AG04450 (cell line): ENCODE measurements at regions of chr15 and their contacts with region 1.

Region 1: GRCh38 chr15:63048115-63048775 is 5.7 kb downstream of the TPM1 start:
- DNase-seq: peak; percentile 88
- H3K4me3 ChIP-seq: peak overlapping the region; percentile 94
- H3K27ac ChIP-seq: peak overlapping the region; percentile 84
- H3K27me3 ChIP-seq: no peaks in the 10 kb centered on the region
- CTCF ChIP-seq: peak; percentile 94

Region 2: GRCh38 chr15:62782039-62782791 is 266.0 kb before region 1 on chr15:
- CTCF ChIA-PET with region 1: interaction called, 17 read pairs
- POLR2A ChIA-PET with region 1: interaction called, 9 read pairs
- DNase-seq: peak; percentile 59
- H3K4me3 ChIP-seq: no peak overlapping the region
- H3K27ac ChIP-seq: peak overlapping the region; percentile 31
- H3K27me3 ChIP-seq: no peaks in the 10 kb centered on the region
- CTCF ChIP-seq: peak; percentile 75

Region 3: DNA sequence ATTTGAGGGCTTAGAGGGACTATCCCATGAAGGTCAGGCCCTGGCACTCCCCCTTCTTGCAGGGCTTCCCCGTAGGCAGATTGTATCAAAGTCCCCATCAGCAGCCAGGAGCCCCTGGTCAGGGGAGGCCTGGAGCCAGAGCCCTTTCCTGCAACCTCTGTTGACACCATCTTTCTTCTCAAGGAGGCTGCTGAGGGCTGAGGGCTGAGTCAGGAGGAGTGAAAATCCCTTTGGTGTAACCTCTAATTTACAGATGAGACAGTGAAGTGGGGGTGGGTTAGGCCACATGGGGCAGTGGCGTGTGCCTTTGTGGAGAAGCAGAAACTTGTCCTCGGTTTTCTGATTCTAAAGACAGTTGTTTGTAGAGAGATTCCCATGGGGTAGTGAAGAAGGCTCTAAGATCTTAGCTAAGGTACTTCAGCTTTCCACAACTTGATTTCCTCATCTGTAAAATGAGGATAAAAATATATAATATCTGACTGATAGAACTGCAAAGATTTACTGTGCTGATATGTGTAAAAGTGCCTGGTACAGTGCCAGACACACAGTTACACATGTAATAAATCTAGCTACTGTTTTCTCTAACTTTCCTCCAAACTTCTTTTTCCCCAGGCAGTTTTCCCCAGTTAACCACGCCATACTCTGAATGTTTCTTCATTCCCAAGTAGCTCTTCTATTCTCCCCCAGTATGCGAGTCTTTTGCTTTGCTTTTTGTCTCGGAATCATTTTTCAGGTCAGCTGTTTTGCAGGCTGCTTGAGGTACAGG is 255.1 kb before region 1 on chr15:
- CTCF ChIA-PET with region 1: no interaction called
- POLR2A ChIA-PET with region 1: no interaction called
- DNase-seq: no peak
- H3K4me3 ChIP-seq: no peak overlapping the region
- H3K27ac ChIP-seq: no peak overlapping the region
- H3K27me3 ChIP-seq: no peaks in the 10 kb centered on the region
- CTCF ChIP-seq: no peak

Region 4: GRCh38 chr15:63004211-63004610 is 44.0 kb before region 1 on chr15:
- CTCF ChIA-PET with region 1: no interaction called
- POLR2A ChIA-PET with region 1: no interaction called
- DNase-seq: no peak
- H3K4me3 ChIP-seq: no peak overlapping the region
- H3K27ac ChIP-seq: no peak overlapping the region
- H3K27me3 ChIP-seq: no peaks in the 10 kb centered on the region
- CTCF ChIP-seq: no peak

Region 5: DNA sequence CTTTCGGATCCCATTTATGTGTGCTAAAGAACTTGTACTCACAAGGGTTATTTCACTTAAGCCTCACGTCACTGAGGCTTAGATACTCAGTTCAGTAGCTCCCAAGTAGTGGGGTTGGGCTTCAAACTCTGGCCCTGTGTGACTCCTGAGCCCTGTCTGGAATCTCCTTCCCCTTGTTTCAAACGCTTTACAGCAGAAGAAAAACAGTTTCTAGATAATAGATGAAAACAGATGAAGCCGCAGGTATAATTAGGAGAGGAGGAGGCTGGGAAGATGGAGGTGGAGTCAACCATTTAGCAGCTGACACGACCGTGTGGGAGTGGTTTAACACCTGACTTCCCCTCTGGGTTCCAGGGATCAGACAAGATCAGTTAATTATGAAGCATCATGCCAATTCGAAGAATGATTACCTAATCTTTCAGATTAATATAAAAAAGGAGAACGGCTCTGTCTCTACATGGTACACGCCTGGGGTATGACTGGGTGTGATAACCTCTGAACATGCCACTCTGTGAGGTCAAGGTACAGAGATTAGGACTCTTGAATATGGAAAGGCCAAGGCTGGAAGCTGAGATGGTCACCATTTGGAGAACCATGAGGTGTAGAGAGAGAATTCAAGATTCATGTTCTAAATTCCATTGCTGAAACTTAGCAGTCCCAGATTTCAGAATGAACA is 25.4 kb after region 1 on chr15:
- CTCF ChIA-PET with region 1: interaction called, 8 read pairs
- POLR2A ChIA-PET with region 1: interaction called, 12 read pairs
- DNase-seq: no peak
- H3K4me3 ChIP-seq: no peak overlapping the region
- H3K27ac ChIP-seq: peak overlapping the region; percentile 22
- H3K27me3 ChIP-seq: no peaks in the 10 kb centered on the region
- CTCF ChIP-seq: no peak

Region 6: GRCh38 chr15:63093486-63094205 is 45.4 kb after region 1 on chr15:
- CTCF ChIA-PET with region 1: interaction called, 69 read pairs
- POLR2A ChIA-PET with region 1: interaction called, 21 read pairs
- DNase-seq: peak; percentile 52
- H3K4me3 ChIP-seq: no peak overlapping the region
- H3K27ac ChIP-seq: peak overlapping the region; percentile 40
- H3K27me3 ChIP-seq: no peaks in the 10 kb centered on the region
- CTCF ChIP-seq: peak; percentile 89

Region 7: GRCh38 chr15:63195569-63196015 is 147.3 kb after region 1 on chr15:
- CTCF ChIA-PET with region 1: interaction called, 11 read pairs
- POLR2A ChIA-PET with region 1: no interaction called
- DNase-seq: no peak
- H3K4me3 ChIP-seq: no peak overlapping the region
- H3K27ac ChIP-seq: no peak overlapping the region
- H3K27me3 ChIP-seq: no peaks in the 10 kb centered on the region
- CTCF ChIP-seq: no peak